ENCODE measurements at regions of chr20 and their contacts with region 1.

Region 1: DNA sequence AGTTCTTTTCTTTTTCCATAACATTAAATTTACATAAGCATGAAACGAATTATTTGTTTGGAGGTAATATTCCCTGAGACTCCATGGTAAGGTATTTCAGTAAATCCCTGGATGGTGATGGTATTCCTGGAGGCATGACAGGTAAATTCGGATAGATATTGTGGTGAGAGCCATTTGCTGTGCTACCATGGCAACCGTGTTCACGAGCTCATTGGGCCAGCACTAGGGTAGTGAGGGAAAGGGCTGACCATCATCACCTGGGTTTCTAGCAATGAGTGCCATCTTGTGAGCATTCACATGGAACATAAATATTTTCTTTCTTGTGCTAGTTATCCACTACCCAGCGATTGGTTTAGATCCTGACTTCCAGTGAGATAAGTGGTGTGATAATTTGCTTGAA is 51.9 kb upstream of the GNRH2 start:
- DNase-seq: no peak
- H3K4me3 ChIP-seq: no peak overlapping the region
- H3K27ac ChIP-seq: no peak overlapping the region
- H3K4me1 ChIP-seq: peaks cover 0 to 9% (median 0%) of the 10 kb centered on the region in 6 donors
- H3K27me3 ChIP-seq: no peaks in the 10 kb centered on the region
- CTCF ChIP-seq: no peak
- POLR2A ChIP-seq: no peak

Region 2: GRCh38 chr20:2873010-2873746 is 118.4 kb before region 1 on chr20 and contains the start of gene PTPRA:
- intact Hi-C with region 1: loop called (anchors 10 kb)
- DNase-seq: peak; percentile 97
- H3K4me3 ChIP-seq: peak within 1 kb of the TSS; percentile 81 to 95 (median 92)
- H3K27ac ChIP-seq: peak within 1 kb of the TSS; percentile 58 to 94 (median 92)
- H3K4me1 ChIP-seq: peaks cover 8 to 74% (median 51%) of the 10 kb centered on the region in 6 donors
- H3K27me3 ChIP-seq: peaks cover 0 to 14% (median 0%) of the 10 kb centered on the region in 7 donors
- CTCF ChIP-seq: no peak
- POLR2A ChIP-seq: peak in 2 of 3 donors; percentile 69
- total RNA-seq, gene PTPRA: 47.6 to 65.5 (median 57.0) TPM